Panc1 (cell line): ENCODE measurements at regions of chr2 and their contacts with region 1.

Region 1: GRCh38 chr2:32946314-32947075 is at the start of gene LTBP1:
- DNase-seq: peak; percentile 53
- ATAC-seq: peak; percentile 93
- H3K4me3 ChIP-seq: peak within 1 kb of the TSS; percentile 60 to 70
- H3K27ac ChIP-seq: no peak within 1 kb of the TSS
- H3K4me1 ChIP-seq: no peaks in the 10 kb centered on the region
- H3K27me3 ChIP-seq: no peaks in the 10 kb centered on the region
- CTCF ChIP-seq: peak; percentile 97
- total RNA-seq, gene LTBP1: 12.5 TPM

Region 2: DNA sequence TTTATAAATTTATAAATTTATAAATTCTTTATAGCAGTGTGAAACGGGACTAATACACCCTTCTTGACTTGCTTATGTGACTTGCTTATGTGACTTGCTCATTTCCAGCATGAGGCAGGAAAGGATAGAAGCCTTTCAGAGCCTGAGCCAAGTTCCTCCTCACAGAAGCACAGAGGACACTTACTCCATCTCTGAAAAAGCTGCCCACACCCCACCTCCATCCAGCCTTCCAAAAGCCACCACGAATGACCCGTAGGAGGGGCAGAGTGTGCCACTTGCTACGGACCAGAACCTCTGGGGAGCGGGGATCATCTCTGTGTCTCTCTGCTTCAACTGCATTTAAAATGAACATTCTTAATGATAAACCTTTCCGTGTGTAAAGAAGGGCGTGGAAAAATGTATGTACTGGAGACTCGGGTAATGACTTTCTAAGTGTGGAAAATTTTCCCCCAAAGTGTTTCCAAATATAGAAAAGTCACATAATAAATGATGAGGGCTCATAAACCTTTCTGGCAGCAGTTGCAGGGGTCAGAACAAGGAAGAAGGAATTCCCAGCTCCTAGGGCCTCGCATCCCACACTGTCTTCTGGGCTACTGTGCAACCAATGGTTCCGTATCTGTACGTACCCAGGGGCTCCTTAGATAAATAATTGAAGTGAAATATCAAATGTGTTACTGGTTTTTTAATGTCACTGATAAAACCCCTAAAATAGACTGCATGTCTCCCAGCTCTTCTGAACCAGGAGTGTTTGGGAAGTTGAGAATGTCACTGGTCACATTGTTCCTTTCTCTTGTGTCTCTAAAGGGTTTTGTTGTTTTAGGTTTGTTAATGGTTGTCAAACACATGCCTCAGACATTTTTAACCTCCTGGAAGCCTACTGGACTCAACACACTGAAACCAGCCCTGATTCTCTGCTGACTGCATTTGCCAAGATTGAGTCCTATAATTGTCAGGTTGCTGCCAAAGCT is 104.3 kb before region 1 on chr2:
- CTCF ChIA-PET with region 1: no interaction called
- POLR2A ChIA-PET with region 1: no interaction called
- in situ Hi-C with region 1: no loop called
- intact Hi-C with region 1: no loop called
- DNase-seq: no peak
- ATAC-seq: no peak
- H3K4me3 ChIP-seq: no peak overlapping the region
- H3K27ac ChIP-seq: no peak overlapping the region
- H3K4me1 ChIP-seq: no peaks in the 10 kb centered on the region
- H3K27me3 ChIP-seq: no peaks in the 10 kb centered on the region
- CTCF ChIP-seq: no peak

Region 3: GRCh38 chr2:33372940-33373553 is 426.6 kb after region 1 on chr2:
- CTCF ChIA-PET with region 1: no interaction called
- POLR2A ChIA-PET with region 1: no interaction called
- in situ Hi-C with region 1: loop called (anchors 10 kb)
- intact Hi-C with region 1: loop called (anchors 10 kb)
- DNase-seq: peak; percentile 62
- ATAC-seq: no peak
- H3K4me3 ChIP-seq: no peak overlapping the region
- H3K27ac ChIP-seq: no peak overlapping the region
- H3K4me1 ChIP-seq: no peaks in the 10 kb centered on the region
- H3K27me3 ChIP-seq: no peaks in the 10 kb centered on the region
- CTCF ChIP-seq: peak; percentile 82; the same call in 1 of the 2 replicates